ENCODE measurements at regions of chr11 and their contacts with region 1.

Region 1: GRCh38 chr11:66386171-66387069 is 14.9 kb upstream of the SLC29A2 start:
- DNase-seq: peak; percentile 88
- H3K4me3 Mint-ChIP-seq: peak overlapping the region; percentile 1
- H3K27ac Mint-ChIP-seq: no peak overlapping the region
- H3K4me1 Mint-ChIP-seq: peaks cover 8% of the 10 kb centered on the region
- H3K27me3 Mint-ChIP-seq: peaks cover 1% of the 10 kb centered on the region

Region 2: DNA sequence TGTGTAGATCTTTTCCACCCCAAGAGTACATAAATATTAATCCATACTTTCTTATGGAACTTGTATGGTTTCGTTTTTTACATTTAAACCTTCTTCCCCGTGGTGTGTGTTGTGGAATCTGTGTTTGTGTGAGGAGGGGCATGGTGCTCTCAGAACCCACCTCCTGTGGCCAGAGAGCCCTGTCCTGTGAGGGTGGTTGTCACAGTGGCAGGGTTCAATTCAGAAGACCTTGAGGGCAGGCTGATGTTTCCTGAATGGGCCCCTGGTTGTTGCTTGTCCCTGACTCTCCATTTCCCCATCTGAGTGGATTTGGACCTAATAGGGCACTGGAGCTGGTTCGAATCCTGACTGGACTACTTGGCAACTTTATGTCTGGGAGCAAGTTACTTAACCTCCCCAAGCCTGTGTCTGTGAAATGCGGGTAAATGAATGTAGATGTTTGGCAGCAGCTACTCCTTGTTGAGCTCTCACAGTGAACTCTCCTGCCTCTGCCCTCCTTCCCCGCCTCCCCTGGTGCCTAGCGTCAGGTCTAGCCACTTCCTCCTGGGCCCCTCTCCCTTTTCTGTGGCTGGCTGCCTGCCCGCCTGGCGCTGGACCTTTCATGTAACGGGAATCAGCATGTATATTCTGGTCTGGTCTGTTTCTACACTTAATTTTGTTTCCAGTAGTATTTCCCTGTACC is 956.6 kb before region 1 on chr11:
- CTCF ChIA-PET with region 1: no interaction called
- POLR2A ChIA-PET with region 1: no interaction called
- intact Hi-C with region 1: no loop called
- DNase-seq: peak; percentile 71
- H3K4me3 Mint-ChIP-seq: peak overlapping the region; percentile 97
- H3K27ac Mint-ChIP-seq: peak overlapping the region; percentile 100
- H3K4me1 Mint-ChIP-seq: peaks cover 77% of the 10 kb centered on the region
- H3K27me3 Mint-ChIP-seq: peaks cover 5% of the 10 kb centered on the region

Region 3: GRCh38 chr11:65988791-65989592 is 397.4 kb before region 1 on chr11:
- CTCF ChIA-PET with region 1: no interaction called
- POLR2A ChIA-PET with region 1: no interaction called
- intact Hi-C with region 1: no loop called
- DNase-seq: peak; percentile 95
- H3K4me3 Mint-ChIP-seq: no peak overlapping the region
- H3K27ac Mint-ChIP-seq: peak overlapping the region; percentile 74
- H3K4me1 Mint-ChIP-seq: peaks cover 4% of the 10 kb centered on the region
- H3K27me3 Mint-ChIP-seq: no peaks in the 10 kb centered on the region

Region 4: GRCh38 chr11:66211100-66211499 is 175.3 kb before region 1 on chr11:
- CTCF ChIA-PET with region 1: no interaction called
- POLR2A ChIA-PET with region 1: no interaction called
- intact Hi-C with region 1: no loop called
- DNase-seq: no peak
- H3K4me3 Mint-ChIP-seq: no peak overlapping the region
- H3K27ac Mint-ChIP-seq: no peak overlapping the region
- H3K4me1 Mint-ChIP-seq: no peaks in the 10 kb centered on the region
- H3K27me3 Mint-ChIP-seq: no peaks in the 10 kb centered on the region

Region 5: GRCh38 chr11:66264924-66265331 is 121.5 kb before region 1 on chr11:
- CTCF ChIA-PET with region 1: no interaction called
- POLR2A ChIA-PET with region 1: no interaction called
- intact Hi-C with region 1: no loop called
- DNase-seq: peak; percentile 59
- H3K4me3 Mint-ChIP-seq: no peak overlapping the region
- H3K27ac Mint-ChIP-seq: no peak overlapping the region
- H3K4me1 Mint-ChIP-seq: peaks cover 24% of the 10 kb centered on the region
- H3K27me3 Mint-ChIP-seq: no peaks in the 10 kb centered on the region

Region 6: GRCh38 chr11:66344550-66345315 is 41.7 kb before region 1 on chr11 and contains the start of gene BRMS1:
- CTCF ChIA-PET with region 1: interaction called, 10 read pairs
- POLR2A ChIA-PET with region 1: no interaction called
- intact Hi-C with region 1: loop called (anchors 5 kb)
- DNase-seq: peak; percentile 98
- H3K4me3 Mint-ChIP-seq: peak within 1 kb of the TSS; percentile 94
- H3K27ac Mint-ChIP-seq: peak within 1 kb of the TSS; percentile 85
- H3K4me1 Mint-ChIP-seq: peaks cover 50% of the 10 kb centered on the region
- H3K27me3 Mint-ChIP-seq: peaks cover 3% of the 10 kb centered on the region
- total RNA-seq, gene BRMS1: 29.3 to 31.2 TPM

Region 7: DNA sequence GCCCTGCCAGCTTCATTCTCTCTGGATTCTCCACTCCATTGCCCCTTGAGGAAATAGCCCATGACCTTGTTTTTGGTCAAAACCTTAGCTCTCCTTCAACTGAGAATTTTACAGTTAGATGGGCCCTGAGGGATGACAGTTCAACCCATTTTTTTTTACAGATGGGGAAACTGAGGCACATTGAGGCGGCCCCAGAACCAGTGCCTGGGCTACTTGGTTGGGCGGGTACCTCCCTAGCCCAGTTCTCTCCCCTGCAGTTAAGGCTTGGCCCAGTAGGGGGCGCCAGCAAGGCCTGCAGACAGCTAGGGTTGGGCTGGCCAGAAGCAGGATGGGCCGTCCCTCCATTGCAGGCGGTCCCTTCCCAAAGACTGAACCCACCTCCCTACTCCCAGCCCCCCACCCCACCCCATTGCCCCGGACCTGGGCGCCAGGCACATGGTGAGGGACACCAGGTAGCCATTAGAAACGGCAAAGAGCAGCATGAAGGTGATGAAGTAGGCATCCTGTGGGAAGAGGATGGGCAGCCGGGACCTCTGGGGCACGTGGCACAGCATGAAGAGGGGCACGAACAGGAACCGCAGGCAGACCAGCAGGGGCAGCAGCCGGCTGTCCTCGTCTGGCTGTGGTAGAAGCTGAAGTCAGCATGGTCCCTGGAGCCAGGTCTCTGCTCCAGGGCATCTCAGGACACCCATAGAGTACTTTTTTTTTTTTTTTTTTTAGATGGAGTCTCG is 22.4 kb before region 1 on chr11:
- CTCF ChIA-PET with region 1: interaction called, 19 read pairs
- POLR2A ChIA-PET with region 1: no interaction called
- intact Hi-C with region 1: no loop called
- DNase-seq: peak; percentile 84
- H3K4me3 Mint-ChIP-seq: no peak overlapping the region
- H3K27ac Mint-ChIP-seq: no peak overlapping the region
- H3K4me1 Mint-ChIP-seq: no peaks in the 10 kb centered on the region
- H3K27me3 Mint-ChIP-seq: no peaks in the 10 kb centered on the region

Region 8: DNA sequence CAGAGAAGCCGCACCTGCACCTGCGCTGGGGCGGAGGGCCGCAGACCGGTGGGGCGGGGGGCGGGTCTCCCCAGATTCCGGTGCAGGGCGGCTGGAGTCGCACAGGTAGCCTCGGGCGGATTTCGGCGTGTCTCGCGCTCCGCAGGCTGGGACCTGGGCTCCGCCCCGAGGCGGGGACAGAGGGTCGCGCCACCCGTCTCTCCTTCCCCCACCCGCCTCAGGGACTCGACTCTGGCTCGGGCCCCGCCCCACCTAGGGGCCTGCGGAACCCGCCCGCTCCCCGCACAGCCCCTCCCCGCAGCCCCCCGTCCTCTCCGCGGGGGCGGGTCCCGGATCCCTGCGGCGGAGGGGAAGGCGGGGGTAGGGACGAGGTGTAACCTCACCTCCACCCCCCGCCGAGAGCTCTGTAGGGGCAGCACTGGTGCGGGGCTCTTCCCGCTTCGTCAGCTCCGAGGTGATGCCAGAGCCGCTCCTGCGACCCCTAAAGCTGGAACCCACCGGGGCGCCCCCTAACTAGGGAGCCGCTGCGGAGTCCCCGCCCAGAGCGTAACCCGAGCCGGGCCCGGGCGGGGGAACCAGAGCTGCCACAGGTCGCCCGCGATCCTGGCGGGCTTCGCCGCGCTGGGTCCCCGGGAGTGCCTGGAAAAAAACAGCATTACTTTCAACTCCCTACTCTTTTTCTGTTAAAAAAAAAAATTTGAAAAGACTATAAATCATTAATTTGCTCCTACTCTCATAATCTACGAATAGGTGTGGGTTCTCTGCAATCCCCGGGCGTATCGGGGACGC is 14.6 kb before region 1 on chr11 and contains the start of gene SLC29A2:
- CTCF ChIA-PET with region 1: interaction called, 31 read pairs
- POLR2A ChIA-PET with region 1: no interaction called
- intact Hi-C with region 1: loop called (anchors 2 kb)
- DNase-seq: peak; percentile 90
- H3K4me3 Mint-ChIP-seq: peak within 1 kb of the TSS; percentile 83
- H3K27ac Mint-ChIP-seq: peak within 1 kb of the TSS; percentile 86
- H3K4me1 Mint-ChIP-seq: peaks cover 16% of the 10 kb centered on the region
- H3K27me3 Mint-ChIP-seq: no peaks in the 10 kb centered on the region
- total RNA-seq, gene SLC29A2: 10.3 to 10.6 TPM

Region 9: DNA sequence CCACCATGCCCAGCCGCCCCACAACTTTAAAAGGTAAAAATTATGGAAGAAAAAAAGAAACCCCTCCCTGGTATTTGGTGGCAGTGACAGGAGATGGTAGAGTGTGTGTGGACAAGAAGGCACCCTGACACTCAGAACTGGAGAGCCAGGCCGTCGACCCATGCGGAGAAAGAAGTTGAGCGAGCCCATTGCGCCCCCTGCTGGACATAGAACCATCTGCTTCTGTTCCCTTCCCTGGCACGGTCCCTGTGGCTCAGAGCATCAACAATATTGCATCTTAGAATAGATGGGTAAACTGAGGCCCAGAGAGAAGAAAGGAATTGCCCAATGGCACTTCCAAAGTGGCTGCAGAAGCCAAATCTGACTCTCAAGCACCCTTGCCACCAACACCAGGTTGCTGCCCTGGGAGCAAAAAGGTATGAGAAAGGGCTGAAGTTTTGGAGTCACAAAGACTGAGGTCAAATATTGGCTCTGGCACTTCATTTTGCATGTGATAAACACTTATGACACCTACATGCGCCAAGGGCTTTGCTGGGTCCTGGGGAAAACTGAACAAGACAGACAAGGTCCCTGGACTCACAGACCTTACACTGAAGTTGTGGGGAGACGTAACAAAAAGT is 43.7 kb after region 1 on chr11:
- CTCF ChIA-PET with region 1: interaction called, 10 read pairs
- POLR2A ChIA-PET with region 1: no interaction called
- intact Hi-C with region 1: no loop called
- DNase-seq: peak; percentile 85
- H3K4me3 Mint-ChIP-seq: no peak overlapping the region
- H3K27ac Mint-ChIP-seq: no peak overlapping the region
- H3K4me1 Mint-ChIP-seq: no peaks in the 10 kb centered on the region
- H3K27me3 Mint-ChIP-seq: no peaks in the 10 kb centered on the region